A673 (cell line): ENCODE measurements at regions of chr6 and their contacts with region 1.

Region 1: GRCh38 chr6:13120483-13121482 is 207.6 kb downstream of the TBC1D7 start:
- DNase-seq: no peak
- H3K4me3 ChIP-seq: no peak overlapping the region
- H3K27ac ChIP-seq: no peak overlapping the region
- H3K4me1 ChIP-seq: no peaks in the 10 kb centered on the region
- H3K27me3 ChIP-seq: peaks cover 24% of the 10 kb centered on the region
- CTCF ChIP-seq: peak; percentile 22; the same call in 1 of the 2 replicates

Region 2: DNA sequence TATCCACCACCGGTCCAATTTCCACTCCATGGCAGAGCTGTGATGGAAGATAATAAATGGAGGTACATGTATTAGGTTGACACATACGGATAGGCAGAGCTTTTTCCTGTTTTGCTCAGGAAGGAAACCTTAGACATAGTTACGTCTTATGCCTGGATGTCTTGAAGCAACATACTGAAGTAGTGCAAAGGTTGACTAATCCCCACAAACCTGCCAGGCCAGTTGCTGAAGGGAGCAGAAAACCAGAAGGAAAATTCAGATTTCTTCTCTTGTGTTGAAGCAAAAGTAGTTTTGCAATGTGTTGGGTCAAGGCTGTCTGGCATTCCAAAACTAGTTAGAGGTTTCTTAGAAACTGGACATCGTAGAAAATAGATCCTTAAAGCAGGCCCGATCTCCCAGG is 335.5 kb before region 1 on chr6:
- CTCF ChIA-PET with region 1: no interaction called
- POLR2A ChIA-PET with region 1: no interaction called
- intact Hi-C with region 1: no loop called
- DNase-seq: no peak
- H3K4me3 ChIP-seq: no peak overlapping the region
- H3K27ac ChIP-seq: no peak overlapping the region
- H3K4me1 ChIP-seq: no peaks in the 10 kb centered on the region
- H3K27me3 ChIP-seq: no peaks in the 10 kb centered on the region
- CTCF ChIP-seq: no peak

Region 3: GRCh38 chr6:13357551-13358075 is 236.8 kb after region 1 on chr6:
- CTCF ChIA-PET with region 1: no interaction called
- POLR2A ChIA-PET with region 1: interaction called, 12 read pairs
- intact Hi-C with region 1: no loop called
- DNase-seq: no peak
- H3K4me3 ChIP-seq: no peak overlapping the region
- H3K27ac ChIP-seq: no peak overlapping the region
- H3K4me1 ChIP-seq: no peaks in the 10 kb centered on the region
- H3K27me3 ChIP-seq: no peaks in the 10 kb centered on the region
- CTCF ChIP-seq: no peak

Region 4: DNA sequence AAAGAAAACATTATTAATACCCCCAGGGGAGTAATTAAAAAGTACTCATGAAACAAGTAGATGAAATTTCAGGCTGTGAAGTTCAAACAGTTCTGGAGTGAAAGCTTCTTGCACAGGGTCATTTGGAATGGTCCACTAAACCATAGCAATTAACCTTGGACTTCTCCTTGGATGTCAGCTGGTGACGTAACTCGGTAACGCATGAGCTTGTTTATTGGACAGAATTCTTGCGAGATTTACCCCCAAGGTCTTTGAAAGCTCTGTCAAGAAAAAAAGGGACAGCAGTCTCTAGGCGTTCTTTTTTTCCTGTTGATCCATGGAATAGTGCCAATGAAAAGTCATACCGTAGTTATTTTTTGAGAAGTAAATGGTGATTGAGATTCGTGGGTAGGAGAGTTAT is 999.0 kb after region 1 on chr6:
- CTCF ChIA-PET with region 1: no interaction called
- POLR2A ChIA-PET with region 1: no interaction called
- intact Hi-C with region 1: no loop called
- DNase-seq: no peak
- H3K4me3 ChIP-seq: no peak overlapping the region
- H3K27ac ChIP-seq: no peak overlapping the region
- H3K4me1 ChIP-seq: peaks cover 6% of the 10 kb centered on the region
- H3K27me3 ChIP-seq: no peaks in the 10 kb centered on the region
- CTCF ChIP-seq: no peak